Esophagus muscularis mucosa (tissue), 4 donors: ENCODE measurements at regions of chr10 and their contacts with region 1.

Region 1: DNA sequence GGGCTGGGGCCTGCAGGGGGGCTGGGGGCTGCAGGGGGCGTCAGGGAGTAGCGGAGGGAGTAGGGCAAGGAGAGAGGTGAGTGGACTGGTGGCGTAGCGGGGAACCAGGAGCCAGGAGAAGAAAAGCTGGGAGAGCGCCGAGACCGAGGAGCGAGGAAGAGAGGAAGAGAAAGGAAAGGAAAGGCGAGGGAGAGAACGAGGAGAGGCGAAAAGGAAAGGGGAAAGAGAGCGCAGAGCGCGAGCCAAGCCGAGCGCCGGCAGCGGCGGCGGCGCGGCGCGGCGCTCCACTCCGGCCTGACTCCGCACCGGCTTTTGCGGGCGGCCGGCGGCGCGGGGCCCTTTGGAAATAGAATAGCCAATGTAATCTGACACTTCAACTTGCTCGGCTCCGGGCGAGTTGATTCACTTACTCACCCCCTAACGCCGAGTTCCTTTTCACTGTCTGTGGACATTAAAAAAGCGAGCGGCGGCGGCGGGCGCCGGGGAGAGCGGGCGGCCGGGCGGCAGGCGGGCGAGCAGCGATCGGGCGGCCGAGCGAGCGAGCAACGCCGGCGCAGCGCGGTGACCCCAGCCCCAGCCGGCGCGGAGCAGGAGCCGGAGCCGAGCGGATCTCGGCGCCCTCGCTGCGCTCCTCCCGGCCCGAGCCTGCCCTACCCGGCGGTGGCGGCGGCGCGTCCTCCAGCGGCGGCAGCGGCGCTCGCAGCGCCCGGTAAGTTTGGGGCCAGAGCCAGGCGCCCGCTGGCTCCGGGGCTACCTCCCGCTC is at the start of gene ZMIZ1:
- DNase-seq: peak; percentile 98
- H3K4me3 ChIP-seq: peak within 1 kb of the TSS; percentile 88 to 99 (median 94)
- H3K27ac ChIP-seq: peak within 1 kb of the TSS; percentile 97 to 100 (median 99)
- H3K4me1 ChIP-seq: peaks cover 37 to 54% (median 51%) of the 10 kb centered on the region in 4 donors
- H3K27me3 ChIP-seq: peaks cover 0 to 7% (median 0%) of the 10 kb centered on the region in 4 donors
- CTCF ChIP-seq: peak; percentile 20 to 44 (median 36)
- EP300 ChIP-seq: no peak
- POLR2A ChIP-seq: peak; percentile 66
- total RNA-seq, gene ZMIZ1: 48.7 to 87.2 (median 66.0) TPM

Region 2: DNA sequence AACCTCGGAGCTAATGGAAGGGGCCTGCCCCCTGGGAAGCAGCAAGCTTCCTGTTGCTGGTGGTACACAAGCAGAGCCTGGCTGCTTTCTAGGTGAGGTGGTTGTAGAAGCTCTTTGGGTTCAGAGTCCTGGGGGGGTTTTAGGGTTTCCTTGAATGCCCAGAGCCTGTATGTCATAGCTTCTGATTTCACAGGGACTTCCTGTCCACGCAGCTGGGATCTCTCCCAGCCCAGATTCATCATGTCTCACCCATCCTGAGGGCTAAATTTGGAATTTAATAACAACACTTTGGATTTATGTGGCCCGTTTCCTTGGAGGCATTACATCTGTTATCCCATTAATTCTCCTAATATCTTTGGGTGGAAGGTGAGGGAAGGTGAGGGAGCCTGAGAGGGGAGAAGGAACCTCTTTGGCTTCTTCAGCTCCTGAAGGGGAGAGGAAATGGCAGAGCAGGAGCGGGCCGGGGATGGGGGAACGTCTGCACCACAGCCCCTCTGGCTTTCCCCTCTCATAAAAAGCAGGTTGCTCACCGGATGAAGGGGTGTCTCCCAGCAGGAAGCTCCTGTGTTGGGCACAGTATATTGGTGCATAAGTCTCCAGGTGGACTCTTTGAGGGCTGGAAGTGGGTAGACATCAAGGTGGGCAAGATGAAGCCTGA is 1015.4 kb before region 1 on chr10:
- intact Hi-C with region 1: loop called (anchors 10 kb)
- DNase-seq: no peak
- H3K4me3 ChIP-seq: no peak overlapping the region
- H3K27ac ChIP-seq: peak overlapping the region in 3 of 4 donors; percentile 13 to 42 (median 27)
- H3K4me1 ChIP-seq: peaks cover 3 to 18% (median 15%) of the 10 kb centered on the region in 4 donors
- H3K27me3 ChIP-seq: no peaks in the 10 kb centered on the region
- CTCF ChIP-seq: no peak
- EP300 ChIP-seq: no peak
- POLR2A ChIP-seq: no peak

Region 3: GRCh38 chr10:78302989-78303854 is 765.5 kb before region 1 on chr10:
- intact Hi-C with region 1: loop called (anchors 10 kb)
- DNase-seq: peak; percentile 96
- H3K4me3 ChIP-seq: peak overlapping the region; percentile 63 to 67 (median 66)
- H3K27ac ChIP-seq: peak overlapping the region; percentile 88 to 92 (median 90)
- H3K4me1 ChIP-seq: peaks cover 11 to 46% (median 27%) of the 10 kb centered on the region in 4 donors
- H3K27me3 ChIP-seq: no peaks in the 10 kb centered on the region
- CTCF ChIP-seq: peak; percentile 51 to 78 (median 55)
- EP300 ChIP-seq: no peak
- POLR2A ChIP-seq: peak; percentile 10

Region 4: GRCh38 chr10:78972947-78973900 is 95.5 kb before region 1 on chr10:
- intact Hi-C with region 1: loop called (anchors 2 kb)
- DNase-seq: peak; percentile 94
- H3K4me3 ChIP-seq: peak overlapping the region; percentile 63 to 66 (median 65)
- H3K27ac ChIP-seq: peak overlapping the region; percentile 94 to 99 (median 97)
- H3K4me1 ChIP-seq: peaks cover 38 to 67% (median 55%) of the 10 kb centered on the region in 4 donors
- H3K27me3 ChIP-seq: no peaks in the 10 kb centered on the region
- CTCF ChIP-seq: no peak
- EP300 ChIP-seq: no peak
- POLR2A ChIP-seq: peak; percentile 25

Region 5: DNA sequence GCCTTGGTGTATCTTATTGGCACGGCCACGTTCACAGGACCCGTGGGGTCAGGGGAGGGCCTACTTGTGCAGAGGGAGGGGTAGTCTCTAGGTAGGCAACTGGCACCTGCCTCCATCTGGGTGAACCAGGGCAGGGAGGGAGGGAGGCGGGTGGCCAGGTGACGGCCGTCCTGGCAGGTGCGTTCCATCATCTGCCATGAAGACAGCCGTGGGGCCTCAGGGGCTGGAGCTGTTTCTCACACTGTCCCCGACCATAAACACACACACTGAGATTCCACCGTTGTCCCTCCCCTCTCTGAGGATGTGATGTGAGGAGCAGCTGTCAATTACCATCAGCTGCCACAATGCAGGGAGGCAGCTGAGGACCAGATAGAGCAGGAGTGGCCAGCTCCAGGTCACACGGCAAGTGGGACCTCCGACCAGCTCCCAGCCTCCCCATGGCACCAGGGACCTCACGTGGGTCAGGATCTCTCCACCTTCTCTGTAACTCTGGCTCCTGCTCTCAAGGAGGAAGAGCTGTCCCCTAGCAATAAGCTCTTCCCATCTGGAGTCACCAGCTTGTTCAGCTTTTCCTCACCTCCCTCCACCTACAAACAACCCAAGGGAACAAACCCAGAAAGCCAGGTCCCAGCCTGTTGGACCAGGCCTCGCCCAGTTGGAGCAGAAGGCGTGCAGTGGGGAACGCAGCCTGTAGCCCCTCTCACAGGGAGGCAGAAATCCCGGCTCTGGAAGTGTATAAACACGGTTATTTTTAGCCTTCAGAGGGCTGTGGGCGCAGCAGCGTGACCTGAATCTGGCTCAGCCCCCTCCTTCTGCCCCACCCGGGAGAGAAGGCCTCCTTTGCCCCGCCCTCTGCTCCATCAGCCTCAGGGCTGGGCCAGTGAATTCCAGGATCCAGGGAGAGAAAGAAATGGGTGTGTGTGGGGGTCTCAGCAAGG is 33.1 kb after region 1 on chr10:
- intact Hi-C with region 1: no loop called
- DNase-seq: no peak
- H3K4me3 ChIP-seq: peak overlapping the region in 3 of 4 donors; percentile 8 to 21 (median 12)
- H3K27ac ChIP-seq: peak overlapping the region; percentile 82 to 84 (median 83)
- H3K4me1 ChIP-seq: peaks cover 98 to 100% (median 100%) of the 10 kb centered on the region in 4 donors
- H3K27me3 ChIP-seq: no peaks in the 10 kb centered on the region
- CTCF ChIP-seq: no peak
- EP300 ChIP-seq: no peak
- POLR2A ChIP-seq: no peak

Region 6: GRCh38 chr10:79195091-79195923 is 126.6 kb after region 1 on chr10:
- intact Hi-C with region 1: loop called (anchors 2 kb)
- DNase-seq: peak; percentile 97
- H3K4me3 ChIP-seq: peak overlapping the region in 3 of 4 donors; percentile 22 to 25 (median 22)
- H3K27ac ChIP-seq: peak overlapping the region; percentile 72 to 83 (median 78)
- H3K4me1 ChIP-seq: peaks cover 45 to 68% (median 65%) of the 10 kb centered on the region in 4 donors
- H3K27me3 ChIP-seq: no peaks in the 10 kb centered on the region
- CTCF ChIP-seq: peak; percentile 89 to 95 (median 93)
- EP300 ChIP-seq: no peak
- POLR2A ChIP-seq: no peak

Region 7: GRCh38 chr10:79400146-79401004 is 331.6 kb after region 1 on chr10:
- intact Hi-C with region 1: no loop called
- DNase-seq: no peak
- H3K4me3 ChIP-seq: peak overlapping the region in 1 of 4 donors; percentile 20
- H3K27ac ChIP-seq: no peak overlapping the region
- H3K4me1 ChIP-seq: no peaks in the 10 kb centered on the region
- H3K27me3 ChIP-seq: no peaks in the 10 kb centered on the region
- CTCF ChIP-seq: peak; percentile 46 to 64 (median 48)
- EP300 ChIP-seq: no peak
- POLR2A ChIP-seq: no peak

Region 8: GRCh38 chr10:79588800-79589199 is 520.1 kb after region 1 on chr10:
- intact Hi-C with region 1: no loop called
- DNase-seq: peak; percentile 64
- H3K4me3 ChIP-seq: no peak overlapping the region
- H3K27ac ChIP-seq: no peak overlapping the region
- H3K4me1 ChIP-seq: no peaks in the 10 kb centered on the region
- H3K27me3 ChIP-seq: peaks cover 0 to 4% (median 0%) of the 10 kb centered on the region in 4 donors
- CTCF ChIP-seq: no peak
- EP300 ChIP-seq: no peak
- POLR2A ChIP-seq: no peak